ENCODE measurements at regions of chr2 and their contacts with region 1.

Region 1: GRCh38 chr2:219278655-219279516 is at the start of gene DNAJB2:
- DNase-seq: peak; percentile 99
- H3K4me3 Mint-ChIP-seq: peak within 1 kb of the TSS; percentile 92
- H3K27ac Mint-ChIP-seq: peak within 1 kb of the TSS; percentile 95
- H3K4me1 Mint-ChIP-seq: peaks cover 37% of the 10 kb centered on the region
- H3K27me3 Mint-ChIP-seq: no peaks in the 10 kb centered on the region
- total RNA-seq, gene DNAJB2: 24.6 to 24.9 TPM

Region 2: GRCh38 chr2:218214116-218214515 is 1064.8 kb before region 1 on chr2:
- CTCF ChIA-PET with region 1: no interaction called
- intact Hi-C with region 1: no loop called
- DNase-seq: no peak
- H3K4me3 Mint-ChIP-seq: no peak overlapping the region
- H3K27ac Mint-ChIP-seq: no peak overlapping the region
- H3K4me1 Mint-ChIP-seq: peaks cover 10% of the 10 kb centered on the region
- H3K27me3 Mint-ChIP-seq: no peaks in the 10 kb centered on the region

Region 3: DNA sequence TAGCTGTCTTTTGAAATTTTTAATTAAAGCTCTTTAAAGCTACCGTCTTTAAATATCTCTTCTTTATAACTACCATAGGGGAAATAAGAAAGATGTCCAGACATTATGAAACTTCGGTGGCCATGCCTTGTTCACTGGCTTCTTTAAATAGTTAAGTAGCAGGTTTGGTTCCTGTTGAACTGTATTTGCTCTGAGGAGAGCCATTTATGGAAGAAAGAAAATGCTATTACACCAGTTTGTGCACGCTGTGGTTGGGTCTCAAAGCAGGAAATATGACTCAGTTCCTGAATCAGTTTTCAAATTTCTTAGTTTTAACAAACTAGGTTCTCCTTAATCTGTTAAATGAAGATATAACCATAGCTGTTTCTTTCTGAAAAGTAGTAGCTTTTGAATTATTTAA is 1049.6 kb before region 1 on chr2:
- CTCF ChIA-PET with region 1: no interaction called
- intact Hi-C with region 1: loop called (anchors 10 kb)
- DNase-seq: peak; percentile 66
- H3K4me3 Mint-ChIP-seq: peak overlapping the region; percentile 32
- H3K27ac Mint-ChIP-seq: peak overlapping the region; percentile 87
- H3K4me1 Mint-ChIP-seq: peaks cover 81% of the 10 kb centered on the region
- H3K27me3 Mint-ChIP-seq: no peaks in the 10 kb centered on the region

Region 4: GRCh38 chr2:218898109-218898878 is 380.6 kb before region 1 on chr2:
- CTCF ChIA-PET with region 1: no interaction called
- intact Hi-C with region 1: loop called (anchors 5 kb)
- DNase-seq: peak; percentile 82
- H3K4me3 Mint-ChIP-seq: peak overlapping the region; percentile 45
- H3K27ac Mint-ChIP-seq: no peak overlapping the region
- H3K4me1 Mint-ChIP-seq: peaks cover 42% of the 10 kb centered on the region
- H3K27me3 Mint-ChIP-seq: peaks cover 27% of the 10 kb centered on the region

Region 5: GRCh38 chr2:219206442-219207253 is 72.2 kb before region 1 on chr2 and contains the start of gene ZFAND2B:
- CTCF ChIA-PET with region 1: interaction called, 7 read pairs
- intact Hi-C with region 1: loop called (anchors 1 kb)
- DNase-seq: peak; percentile 94
- H3K4me3 Mint-ChIP-seq: peak within 1 kb of the TSS; percentile 94
- H3K27ac Mint-ChIP-seq: peak within 1 kb of the TSS; percentile 96
- H3K4me1 Mint-ChIP-seq: peaks cover 32% of the 10 kb centered on the region
- H3K27me3 Mint-ChIP-seq: no peaks in the 10 kb centered on the region
- total RNA-seq, gene ZFAND2B: 32.6 to 33.6 TPM

Region 6: GRCh38 chr2:219245148-219245898 is 33.6 kb before region 1 on chr2 and contains the starts of genes GLB1L and STK16:
- CTCF ChIA-PET with region 1: interaction called, 8 read pairs
- intact Hi-C with region 1: loop called (anchors 1 kb)
- DNase-seq: peak; percentile 92
- H3K4me3 Mint-ChIP-seq: peak within 1 kb of the TSS; percentile 98
- H3K27ac Mint-ChIP-seq: peak within 1 kb of the TSS; percentile 99
- H3K4me1 Mint-ChIP-seq: peaks cover 57% of the 10 kb centered on the region
- H3K27me3 Mint-ChIP-seq: no peaks in the 10 kb centered on the region
- total RNA-seq, gene GLB1L: 2.1 TPM
- total RNA-seq, gene STK16: 33.7 to 35.5 TPM

Region 7: DNA sequence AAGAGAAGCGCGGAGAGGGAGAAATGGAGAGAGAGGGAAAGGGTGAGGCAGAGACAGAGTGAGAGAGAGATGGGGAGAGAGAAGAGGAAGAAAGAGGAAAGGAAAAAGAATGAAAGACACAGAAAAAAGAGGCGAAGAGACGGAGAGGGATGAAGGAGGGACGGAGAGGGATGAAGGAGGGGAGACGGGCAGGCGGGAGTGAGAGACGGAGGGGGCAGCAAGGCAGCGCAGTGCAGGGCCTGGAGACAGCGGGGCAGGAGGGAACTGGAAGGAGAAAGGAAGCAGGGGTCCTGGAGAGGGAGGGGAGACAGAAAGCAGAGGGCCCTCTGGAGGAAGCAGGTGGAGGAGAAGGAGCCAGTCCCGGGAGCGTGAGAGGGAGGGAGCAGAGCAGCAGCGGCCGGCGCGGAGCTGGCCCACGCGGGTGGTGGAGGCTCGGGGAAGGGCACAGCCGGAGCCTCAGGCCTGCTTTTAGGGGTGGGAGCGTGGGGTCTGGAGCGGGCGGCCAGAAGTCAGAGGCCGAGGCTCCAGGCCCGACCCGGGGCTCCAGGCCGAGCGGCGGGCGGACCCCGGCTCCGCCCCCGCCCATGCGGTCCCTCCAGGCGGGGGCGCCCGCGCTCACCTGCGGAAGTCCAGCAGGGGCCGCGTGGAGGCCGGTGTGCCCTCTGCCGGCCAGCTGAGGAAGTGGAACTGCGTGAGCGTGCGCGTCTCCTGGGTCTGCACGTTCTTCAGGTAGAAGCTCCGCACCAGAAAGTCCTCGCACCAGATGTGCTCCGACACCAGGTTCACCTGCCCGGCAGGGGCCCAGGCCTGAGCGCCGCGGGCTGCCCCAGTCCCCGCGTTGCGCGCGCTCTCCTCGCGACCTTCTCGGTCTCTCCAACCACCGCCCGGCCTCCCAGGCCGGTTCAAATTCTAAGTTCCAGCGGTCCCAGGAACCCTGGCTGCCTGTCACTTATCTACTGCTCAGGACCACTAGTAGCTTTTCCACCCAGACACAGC is 15.8 kb after region 1 on chr2:
- CTCF ChIA-PET with region 1: interaction called, 196 read pairs
- intact Hi-C with region 1: loop called (anchors 1 kb)
- DNase-seq: peak; percentile 89
- H3K4me3 Mint-ChIP-seq: peak overlapping the region; percentile 77
- H3K27ac Mint-ChIP-seq: no peak overlapping the region
- H3K4me1 Mint-ChIP-seq: peaks cover 20% of the 10 kb centered on the region
- H3K27me3 Mint-ChIP-seq: peaks cover 3% of the 10 kb centered on the region

Region 8: DNA sequence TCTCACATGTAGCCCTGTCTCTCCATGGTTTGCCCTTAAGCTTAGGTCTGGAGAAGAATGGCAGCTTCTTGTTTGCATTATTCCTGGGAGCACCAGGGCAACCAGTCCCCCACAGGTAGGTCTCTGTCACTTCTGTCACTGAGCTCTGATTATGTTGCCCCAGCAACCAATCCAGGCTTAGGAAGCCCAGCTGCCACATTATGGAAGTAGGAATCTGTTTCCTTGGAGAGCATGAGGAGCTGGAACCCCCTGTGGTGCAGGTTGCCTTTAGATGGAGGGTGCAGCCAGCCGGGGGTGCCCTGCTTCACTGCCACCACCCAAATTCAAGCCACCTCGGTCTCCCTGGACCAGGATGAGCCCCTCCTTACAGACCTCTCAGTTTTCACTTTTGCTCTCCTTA is 48.8 kb after region 1 on chr2:
- CTCF ChIA-PET with region 1: no interaction called
- intact Hi-C with region 1: no loop called
- DNase-seq: no peak
- H3K4me3 Mint-ChIP-seq: no peak overlapping the region
- H3K27ac Mint-ChIP-seq: no peak overlapping the region
- H3K4me1 Mint-ChIP-seq: no peaks in the 10 kb centered on the region
- H3K27me3 Mint-ChIP-seq: peaks cover 23% of the 10 kb centered on the region

Region 9: GRCh38 chr2:219543601-219544358 is 264.9 kb after region 1 on chr2 and contains the starts of genes CHPF and TMEM198:
- CTCF ChIA-PET with region 1: no interaction called
- intact Hi-C with region 1: loop called (anchors 1 kb)
- DNase-seq: peak; percentile 97
- H3K4me3 Mint-ChIP-seq: peak within 1 kb of the TSS; percentile 79
- H3K27ac Mint-ChIP-seq: no peak within 1 kb of the TSS
- H3K4me1 Mint-ChIP-seq: peaks cover 20% of the 10 kb centered on the region
- H3K27me3 Mint-ChIP-seq: peaks cover 8% of the 10 kb centered on the region
- total RNA-seq, gene CHPF: 8.5 to 9.0 TPM
- total RNA-seq, gene TMEM198: 0.86 to 1.1 TPM